Thyroid gland (tissue), 4 donors: ENCODE measurements at regions of chr6 and their contacts with region 1.

Region 1: DNA sequence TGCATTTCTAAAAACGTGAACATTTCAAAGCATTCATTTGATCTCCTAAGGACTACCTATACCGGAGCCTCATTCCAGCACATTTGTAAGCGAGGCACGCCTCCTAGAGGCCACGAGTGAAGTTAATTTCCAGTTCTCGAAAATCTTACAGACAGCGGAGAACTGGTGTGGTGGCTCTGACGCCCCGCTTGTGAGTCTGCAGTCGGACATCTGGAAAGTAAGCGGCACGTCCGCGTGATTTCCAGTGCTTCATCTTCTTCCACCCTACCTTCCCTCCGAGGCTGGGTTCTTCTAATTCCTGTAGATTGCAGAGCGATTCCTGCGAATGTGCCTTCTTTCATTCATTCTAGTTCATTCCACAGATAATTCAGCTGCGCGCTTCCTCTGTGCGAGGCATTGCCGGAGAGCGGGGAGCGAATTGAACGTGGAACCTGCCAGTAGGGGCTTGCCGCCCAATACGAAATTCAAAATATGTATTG is 810 bp upstream of the PRIM2 start:
- DNase-seq: peak; percentile 84 to 88
- H3K4me3 ChIP-seq: peak overlapping the region; percentile 1 to 73 (median 42)
- H3K27ac ChIP-seq: peak overlapping the region in 2 of 3 donors; percentile 62 to 71
- H3K4me1 ChIP-seq: peaks cover 5 to 17% of the 10 kb centered on the region in 2 donors
- H3K27me3 ChIP-seq: no peaks in the 10 kb centered on the region
- CTCF ChIP-seq: peak; percentile 36 to 93 (median 80)
- POLR2A ChIP-seq: peak in 1 of 2 donors; percentile 48

Region 2: DNA sequence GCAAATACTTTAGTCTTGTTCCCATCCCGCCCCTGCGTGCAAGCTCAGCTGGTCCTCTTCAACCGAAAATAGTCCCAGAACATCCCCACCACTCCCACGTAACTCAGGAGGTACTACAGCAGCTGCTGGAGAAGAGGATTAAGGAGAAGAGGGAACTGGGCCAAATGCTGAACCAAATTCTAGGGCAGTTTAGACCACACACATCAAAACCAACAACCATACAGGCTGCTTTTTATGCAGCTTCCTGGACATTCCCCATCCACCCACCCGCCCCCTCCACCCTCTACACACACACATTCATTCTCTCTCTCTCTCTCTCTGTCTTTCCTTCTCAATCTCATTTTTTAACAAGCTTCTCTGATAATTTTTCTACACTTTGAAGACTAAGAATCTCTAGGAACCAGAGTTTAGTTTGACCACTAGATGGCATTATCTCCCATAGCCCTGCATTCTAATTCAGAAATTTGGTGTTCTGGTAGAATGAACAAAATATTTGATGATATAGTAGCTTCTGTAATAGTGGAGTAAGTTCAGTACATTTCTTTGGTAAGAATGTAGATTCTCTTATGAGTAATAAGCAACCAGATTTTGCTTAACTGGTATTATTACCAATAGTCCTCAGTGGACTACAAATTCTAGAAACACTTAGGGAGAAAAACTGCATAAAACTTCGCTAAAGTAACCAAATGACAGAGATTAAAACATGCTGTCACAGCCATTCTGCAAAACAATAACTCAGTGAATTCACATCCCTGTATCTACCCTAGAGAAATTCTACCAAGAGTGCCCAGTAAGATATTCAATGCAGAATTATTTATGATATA is 413.8 kb before region 1 on chr6:
- intact Hi-C with region 1: loop called (anchors 5 kb)
- DNase-seq: no peak
- H3K4me3 ChIP-seq: no peak overlapping the region
- H3K27ac ChIP-seq: no peak overlapping the region
- H3K4me1 ChIP-seq: no peaks in the 10 kb centered on the region
- H3K27me3 ChIP-seq: no peaks in the 10 kb centered on the region
- CTCF ChIP-seq: peak; percentile 2 to 76 (median 50)
- POLR2A ChIP-seq: no peak

Region 3: DNA sequence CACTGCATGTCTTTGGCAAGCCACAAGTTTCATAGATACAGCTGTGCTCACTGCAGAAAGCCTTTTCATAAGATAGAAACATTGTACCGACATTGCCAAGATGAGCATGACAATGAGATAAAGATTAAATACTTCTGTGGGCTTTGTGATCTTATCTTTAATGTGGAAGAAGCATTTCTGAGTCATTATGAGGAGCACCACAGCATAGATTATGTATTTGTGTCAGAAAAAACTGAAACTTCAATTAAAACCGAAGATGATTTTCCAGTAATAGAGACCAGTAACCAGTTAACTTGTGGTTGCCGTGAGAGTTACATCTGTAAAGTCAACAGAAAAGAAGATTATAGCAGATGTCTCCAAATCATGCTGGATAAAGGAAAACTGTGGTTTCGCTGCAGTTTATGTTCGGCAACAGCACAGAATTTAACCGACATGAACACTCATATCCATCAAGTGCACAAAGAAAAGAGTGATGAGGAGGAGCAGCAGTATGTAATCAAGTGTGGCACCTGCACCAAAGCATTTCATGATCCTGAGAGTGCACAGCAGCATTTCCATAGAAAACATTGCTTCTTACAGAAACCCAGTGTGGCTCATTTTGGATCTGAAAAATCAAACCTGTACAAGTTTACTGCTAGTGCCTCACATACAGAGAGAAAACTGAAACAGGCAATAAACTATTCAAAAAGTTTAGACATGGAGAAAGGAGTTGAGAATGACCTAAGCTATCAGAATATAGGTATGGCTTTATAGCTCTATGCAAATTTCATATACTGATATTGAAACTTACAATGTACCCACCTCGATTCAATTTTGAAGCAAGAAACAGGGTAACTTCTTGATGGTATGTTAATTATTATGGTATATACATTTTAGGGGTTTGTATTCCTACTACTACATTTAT is 168.4 kb before region 1 on chr6:
- intact Hi-C with region 1: no loop called
- DNase-seq: no peak
- H3K4me3 ChIP-seq: no peak overlapping the region
- H3K27ac ChIP-seq: no peak overlapping the region
- H3K4me1 ChIP-seq: no peaks in the 10 kb centered on the region
- H3K27me3 ChIP-seq: no peaks in the 10 kb centered on the region
- CTCF ChIP-seq: no peak
- POLR2A ChIP-seq: no peak

Region 4: DNA sequence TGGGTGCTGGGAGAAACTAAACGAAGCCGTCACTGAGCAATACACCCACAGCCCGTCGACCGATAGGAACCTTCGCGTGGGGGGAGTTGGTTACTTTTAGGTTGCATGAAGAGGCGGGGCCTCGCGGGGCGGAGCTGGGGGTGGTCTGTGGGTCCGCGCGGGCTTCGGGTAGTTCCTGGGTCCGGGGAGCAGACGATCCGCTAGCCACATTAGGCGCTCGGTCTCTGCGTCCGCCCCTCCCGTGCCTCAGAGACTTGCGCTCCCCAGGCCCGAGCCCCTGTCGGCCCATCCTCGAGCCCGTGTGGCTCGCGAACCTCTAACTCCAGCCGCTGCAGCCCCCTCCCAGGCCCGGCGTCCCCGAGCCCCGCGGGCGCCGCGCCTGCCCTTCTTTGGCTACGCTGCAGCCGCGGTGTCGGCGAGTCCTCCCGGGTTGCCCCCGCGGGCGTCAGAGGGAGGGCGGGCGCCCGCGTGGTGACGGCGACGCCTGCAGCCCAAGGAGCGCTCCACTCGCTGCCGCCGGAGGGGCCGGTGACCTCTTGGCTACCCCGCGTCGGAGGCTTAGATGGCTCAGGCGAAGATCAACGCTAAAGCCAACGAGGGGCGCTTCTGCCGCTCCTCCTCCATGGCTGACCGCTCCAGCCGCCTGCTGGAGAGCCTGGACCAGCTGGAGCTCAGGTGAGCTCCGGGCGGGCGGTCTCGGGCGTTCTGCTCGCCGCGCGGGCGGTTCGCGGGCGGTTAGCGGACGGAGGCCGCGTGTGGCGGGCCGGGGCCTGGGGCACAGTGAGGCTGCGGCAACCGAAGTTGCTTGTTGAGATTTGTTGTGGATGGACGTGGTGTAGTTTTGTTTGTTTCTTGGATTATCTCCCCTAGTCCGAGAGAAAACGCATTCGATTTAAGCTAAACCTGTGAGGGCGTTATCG is 144.2 kb before region 1 on chr6 and contains the start of gene BAG2:
- intact Hi-C with region 1: loop called (anchors 10 kb)
- DNase-seq: peak; percentile 94 to 95
- H3K4me3 ChIP-seq: peak within 1 kb of the TSS; percentile 33 to 65 (median 39)
- H3K27ac ChIP-seq: peak within 1 kb of the TSS; percentile 69 to 95 (median 93)
- H3K4me1 ChIP-seq: peaks cover 12 to 16% of the 10 kb centered on the region in 2 donors
- H3K27me3 ChIP-seq: no peaks in the 10 kb centered on the region
- CTCF ChIP-seq: peak in 4 of 6 experiments; percentile 38 to 53 (median 46)
- POLR2A ChIP-seq: peak; percentile 55 to 90
- total RNA-seq, gene BAG2: 9.5 to 11.5 (median 10.9) TPM

Region 5: DNA sequence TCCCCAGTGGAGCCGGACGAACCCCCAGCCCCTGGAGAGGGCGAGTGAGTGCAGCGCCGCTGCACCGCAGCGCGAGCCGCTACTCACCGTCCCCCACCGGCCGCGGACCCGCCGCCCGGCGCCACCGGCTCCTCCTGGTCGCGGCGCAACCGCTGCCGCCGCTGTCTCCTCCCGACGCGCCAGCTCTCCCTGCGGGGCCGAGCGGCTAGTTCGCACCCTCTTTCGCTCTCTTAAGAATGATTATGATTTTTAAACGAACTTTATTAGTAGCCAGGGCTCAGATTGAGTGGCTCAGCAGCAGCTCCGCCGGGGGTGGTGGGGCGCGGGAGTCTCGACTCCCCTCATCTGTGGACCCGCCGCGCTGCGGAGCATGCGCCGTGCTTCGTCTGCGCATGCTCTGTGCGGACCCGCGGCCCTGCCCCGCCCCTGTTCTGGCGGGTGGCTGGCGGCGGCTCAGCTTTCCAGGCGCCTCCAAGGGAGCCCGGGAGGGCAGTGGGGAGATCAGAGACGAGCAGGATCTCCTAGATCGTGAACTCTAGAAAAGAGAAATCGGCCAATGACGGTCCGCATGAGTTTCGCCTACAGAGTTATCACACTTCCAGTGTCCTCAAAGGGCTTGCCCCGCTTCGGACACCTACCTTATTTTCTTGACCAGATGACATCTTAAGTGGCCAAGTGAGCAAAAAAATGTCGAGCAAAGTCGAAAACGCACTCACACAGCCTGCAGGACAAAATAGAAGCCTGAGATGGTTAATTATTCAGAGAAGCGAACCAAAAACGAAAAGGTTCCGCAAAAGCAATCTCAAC is 94.5 kb before region 1 on chr6 and contains the start of gene RAB23:
- intact Hi-C with region 1: loop called (anchors 10 kb)
- DNase-seq: peak; percentile 80 to 82
- H3K4me3 ChIP-seq: peak within 1 kb of the TSS; percentile 29 to 89 (median 87)
- H3K27ac ChIP-seq: peak within 1 kb of the TSS; percentile 61 to 97 (median 94)
- H3K4me1 ChIP-seq: peaks cover 4 to 7% of the 10 kb centered on the region in 2 donors
- H3K27me3 ChIP-seq: no peaks in the 10 kb centered on the region
- CTCF ChIP-seq: peak in 2 of 6 experiments; percentile 5 to 13
- POLR2A ChIP-seq: peak; percentile 73 to 95
- total RNA-seq, gene RAB23: 19.6 to 38.9 (median 27.9) TPM